BJ (cell line): ENCODE measurements at regions of chr16 and their contacts with region 1.

Region 1: DNA sequence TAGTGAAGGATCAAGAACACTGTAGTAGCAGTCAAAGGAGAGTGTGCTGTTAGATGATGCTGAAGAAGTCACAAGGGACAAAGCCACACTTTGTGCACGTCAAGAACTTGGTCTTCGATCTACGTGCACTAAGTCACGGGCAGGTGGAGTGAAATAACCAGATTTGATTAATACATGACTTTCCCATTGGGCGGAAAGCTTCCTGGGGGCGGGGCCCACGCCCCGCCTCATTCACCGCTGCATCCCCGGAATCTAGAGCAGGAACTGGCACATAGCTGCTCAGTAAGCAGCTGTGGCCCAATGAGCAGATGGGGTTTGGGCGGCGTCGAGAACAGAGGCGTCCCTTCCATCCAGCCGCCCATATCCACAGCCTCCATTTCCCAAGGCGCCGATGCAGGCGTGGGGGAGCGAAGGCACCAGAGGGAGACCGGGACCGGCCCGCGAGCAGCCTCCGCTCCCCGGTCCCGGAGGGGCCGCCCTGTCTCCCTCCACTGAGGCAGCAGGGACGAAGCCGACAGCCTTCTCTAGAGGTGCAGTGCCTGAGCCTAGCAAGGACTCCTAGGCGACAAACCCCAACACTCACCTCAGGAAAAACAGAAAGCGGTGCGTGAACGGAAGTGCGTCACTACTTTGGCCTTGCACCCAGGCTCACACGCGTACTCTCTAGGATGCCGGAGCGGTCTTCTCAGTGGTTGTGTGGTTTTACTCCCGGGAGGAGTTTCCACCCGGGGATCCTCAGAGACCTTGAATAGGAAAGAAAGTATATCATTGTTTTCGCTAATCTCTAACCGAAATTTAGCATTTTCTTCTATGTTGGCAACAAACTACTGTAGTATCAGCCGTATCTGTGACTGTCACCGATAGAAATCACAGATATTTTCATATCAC is 4.9 kb downstream of the ZNF19 start:
- DNase-seq: peak; percentile 51
- H3K4me3 ChIP-seq: peak overlapping the region; percentile 89
- H3K27me3 ChIP-seq: no peaks in the 10 kb centered on the region
- CTCF ChIP-seq: no peak

Region 2: DNA sequence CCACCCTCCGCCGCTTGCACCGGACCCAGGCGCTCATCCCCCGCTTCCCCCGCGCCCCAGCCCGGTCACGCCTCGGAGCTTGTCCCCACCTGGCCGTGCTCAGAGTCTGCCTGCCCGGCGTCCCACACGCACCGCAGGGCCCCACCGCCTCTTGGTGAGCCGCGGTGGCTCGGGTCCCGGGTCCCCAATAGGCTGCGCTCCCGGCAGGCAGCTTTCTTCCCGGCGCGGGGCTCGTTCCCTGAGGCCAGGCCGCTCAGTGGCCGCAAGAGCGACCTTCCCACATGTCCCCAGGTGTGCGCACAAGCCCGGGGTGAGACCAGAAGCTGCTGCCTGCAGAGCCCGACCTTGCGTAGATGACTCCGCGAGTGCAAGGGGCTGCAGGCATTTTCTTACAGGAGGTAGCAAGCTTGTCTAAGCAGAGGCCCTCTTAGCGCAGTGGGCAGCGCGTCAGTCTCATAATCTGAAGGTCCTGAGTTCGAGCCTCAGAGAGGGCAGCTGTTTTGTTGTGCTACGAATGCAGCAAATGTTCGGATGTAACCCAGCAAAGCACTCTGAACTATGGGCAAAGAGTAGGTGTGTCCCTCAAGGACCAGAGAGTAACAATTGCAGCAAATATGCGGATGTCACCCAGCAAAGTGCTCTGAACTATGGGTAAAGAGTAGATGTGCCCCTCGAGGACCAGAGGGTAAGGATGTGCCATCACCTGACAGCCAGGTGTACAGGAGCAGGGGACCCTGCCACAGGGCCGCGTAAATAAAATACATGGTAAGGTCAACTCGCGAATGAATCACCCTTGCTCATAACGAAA is 58.0 kb before region 1 on chr16:
- CTCF ChIA-PET with region 1: no interaction called
- POLR2A ChIA-PET with region 1: no interaction called
- DNase-seq: no peak
- H3K4me3 ChIP-seq: peak overlapping the region; percentile 8; the same call in 1 of the 2 replicates
- H3K27me3 ChIP-seq: peaks cover 9% of the 10 kb centered on the region; the same call in 1 of the 2 replicates
- CTCF ChIP-seq: no peak

Region 3: GRCh38 chr16:71564155-71564967 is 80.1 kb after region 1 on chr16:
- CTCF ChIA-PET with region 1: no interaction called
- POLR2A ChIA-PET with region 1: interaction called, 15 read pairs
- DNase-seq: no peak
- H3K4me3 ChIP-seq: peak overlapping the region; percentile 63
- H3K27me3 ChIP-seq: no peaks in the 10 kb centered on the region
- CTCF ChIP-seq: no peak